ENCODE measurements at regions of chr17 and their contacts with region 1.

Region 1: GRCh38 chr17:64648234-64648633 is 13.9 kb downstream of the SMURF2 start:
- DNase-seq: no peak
- H3K4me3 ChIP-seq: no peak overlapping the region
- H3K27ac ChIP-seq: no peak overlapping the region
- H3K4me1 ChIP-seq: peaks cover 24% of the 10 kb centered on the region
- H3K27me3 ChIP-seq: no peaks in the 10 kb centered on the region
- CTCF ChIP-seq: no peak
- POLR2A ChIP-seq: no peak

Region 2: GRCh38 chr17:64506576-64507477 is 141.4 kb before region 1 on chr17 and contains the start of gene CEP95:
- CTCF ChIA-PET with region 1: interaction called, 3 read pairs
- POLR2A ChIA-PET with region 1: interaction called, 4 read pairs
- dilution Hi-C with region 1: no loop called
- intact Hi-C with region 1: loop called (anchors 5 kb)
- DNase-seq: peak; percentile 96
- H3K4me3 ChIP-seq: peak within 1 kb of the TSS; percentile 65 to 97 (median 95)
- H3K27ac ChIP-seq: peak within 1 kb of the TSS; percentile 98
- H3K4me1 ChIP-seq: peaks cover 34% of the 10 kb centered on the region
- H3K27me3 ChIP-seq: no peaks in the 10 kb centered on the region
- CTCF ChIP-seq: no peak
- POLR2A ChIP-seq: peak; percentile 65
- total RNA-seq, gene CEP95: 35.5 and 42.6 TPM in 2 replicates

Region 3: DNA sequence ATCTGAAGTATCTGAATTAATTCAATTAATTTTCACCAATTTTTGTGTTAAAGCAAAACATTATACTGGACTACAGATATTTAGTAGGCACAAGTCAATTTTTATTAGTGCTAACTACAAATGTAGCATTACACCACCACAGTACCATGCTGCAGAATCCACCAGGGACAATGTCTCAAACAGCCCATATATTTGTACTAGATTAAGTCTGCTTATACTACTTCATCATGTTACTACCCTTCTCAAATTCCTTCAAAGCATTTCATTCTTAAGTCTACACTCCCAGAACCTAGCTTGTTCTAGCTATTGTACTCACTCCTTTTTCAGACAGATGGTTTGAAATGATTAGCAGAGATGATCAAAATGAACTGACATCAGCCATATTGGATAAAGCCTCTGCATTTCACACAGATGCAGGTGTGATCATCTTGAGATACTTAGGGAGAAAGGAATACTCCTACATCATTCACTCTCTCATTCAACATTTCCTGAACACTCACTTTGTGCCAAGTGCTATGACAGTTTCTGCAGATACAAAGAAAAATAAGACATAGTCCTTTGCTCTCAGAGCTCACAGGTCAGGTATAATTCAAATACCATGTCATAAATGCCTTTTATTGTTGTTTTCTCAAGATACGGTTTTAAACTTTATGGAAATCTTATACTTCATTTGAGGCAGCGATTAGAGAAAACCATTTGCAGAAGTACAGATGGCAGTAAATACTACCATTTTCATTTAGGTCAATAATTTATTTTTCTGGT is 33.8 kb before region 1 on chr17:
- CTCF ChIA-PET with region 1: interaction called, 7 read pairs
- POLR2A ChIA-PET with region 1: no interaction called
- dilution Hi-C with region 1: no loop called
- intact Hi-C with region 1: loop called (anchors 5 kb)
- DNase-seq: no peak
- H3K4me3 ChIP-seq: no peak overlapping the region
- H3K27ac ChIP-seq: no peak overlapping the region
- H3K4me1 ChIP-seq: peaks cover 38% of the 10 kb centered on the region
- H3K27me3 ChIP-seq: no peaks in the 10 kb centered on the region
- CTCF ChIP-seq: no peak
- POLR2A ChIP-seq: no peak

Region 4: GRCh38 chr17:64686705-64687104 is 38.5 kb after region 1 on chr17:
- CTCF ChIA-PET with region 1: no interaction called
- POLR2A ChIA-PET with region 1: no interaction called
- dilution Hi-C with region 1: no loop called
- intact Hi-C with region 1: no loop called
- DNase-seq: no peak
- H3K4me3 ChIP-seq: no peak overlapping the region
- H3K27ac ChIP-seq: no peak overlapping the region
- H3K4me1 ChIP-seq: peaks cover 8% of the 10 kb centered on the region
- H3K27me3 ChIP-seq: no peaks in the 10 kb centered on the region
- CTCF ChIP-seq: no peak
- POLR2A ChIP-seq: no peak